Pancreas (tissue), 10 donors: ENCODE measurements at regions of chr15 and their contacts with region 1.

Region 1: GRCh38 chr15:38683382-38684242 is 119.0 kb upstream of the RASGRP1 start:
- DNase-seq: peak in 5 of 6 donors; percentile 41 to 70 (median 52)
- ATAC-seq: peak; percentile 84 to 99 (median 96)
- H3K4me3 ChIP-seq: no peak overlapping the region
- H3K27ac ChIP-seq: no peak overlapping the region
- H3K4me1 ChIP-seq: no peaks in the 10 kb centered on the region
- H3K27me3 ChIP-seq: no peaks in the 10 kb centered on the region
- CTCF ChIP-seq: peak; percentile 36 to 66 (median 60)

Region 2: DNA sequence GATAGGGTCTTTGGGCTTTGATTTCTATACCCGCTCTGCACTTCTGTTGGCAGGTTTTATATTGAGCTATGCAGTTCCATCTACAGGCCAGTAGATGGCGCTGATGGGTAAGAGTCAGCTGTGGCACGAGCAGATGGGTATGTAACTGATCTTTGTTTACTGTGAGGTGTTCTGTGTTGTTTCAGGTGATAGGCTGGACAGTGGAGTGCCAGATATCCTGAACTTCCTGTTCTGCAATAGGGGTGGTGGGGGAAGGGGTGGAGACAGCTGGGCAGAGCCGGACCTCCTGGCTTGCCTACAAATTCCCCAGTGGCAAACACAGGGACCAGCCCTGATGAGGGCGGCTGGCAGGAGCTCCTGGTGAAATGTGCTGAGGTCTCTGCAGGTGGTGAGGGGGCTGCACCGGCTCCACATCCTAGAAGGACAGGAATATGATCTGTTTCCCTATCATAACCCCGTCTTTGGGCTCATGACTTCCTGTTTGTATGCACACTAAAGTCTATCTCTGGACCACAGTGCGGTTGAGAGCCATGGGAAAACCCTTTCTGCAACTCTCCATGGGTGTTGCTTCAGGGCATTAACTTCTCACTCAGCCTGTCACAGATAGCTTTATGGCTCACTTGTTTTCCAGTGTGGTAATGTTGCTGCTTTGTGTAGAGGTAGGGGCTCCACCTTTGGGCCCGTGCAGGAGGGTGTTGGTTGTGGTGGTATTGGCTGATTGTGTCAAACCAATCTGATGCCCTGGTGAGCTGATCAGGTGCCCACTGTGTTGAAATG is 243.1 kb before region 1 on chr15:
- intact Hi-C with region 1: loop called in 1 of 3 experiments (anchors 10 kb)
- DNase-seq: peak in 5 of 6 donors; percentile 43 to 67 (median 56)
- ATAC-seq: peak; percentile 72 to 99 (median 96)
- H3K4me3 ChIP-seq: no peak overlapping the region
- H3K27ac ChIP-seq: no peak overlapping the region
- H3K4me1 ChIP-seq: no peaks in the 10 kb centered on the region
- H3K27me3 ChIP-seq: peaks cover 0 to 5% (median 0%) of the 10 kb centered on the region in 4 donors
- CTCF ChIP-seq: peak; percentile 78 to 96 (median 92)

Region 3: DNA sequence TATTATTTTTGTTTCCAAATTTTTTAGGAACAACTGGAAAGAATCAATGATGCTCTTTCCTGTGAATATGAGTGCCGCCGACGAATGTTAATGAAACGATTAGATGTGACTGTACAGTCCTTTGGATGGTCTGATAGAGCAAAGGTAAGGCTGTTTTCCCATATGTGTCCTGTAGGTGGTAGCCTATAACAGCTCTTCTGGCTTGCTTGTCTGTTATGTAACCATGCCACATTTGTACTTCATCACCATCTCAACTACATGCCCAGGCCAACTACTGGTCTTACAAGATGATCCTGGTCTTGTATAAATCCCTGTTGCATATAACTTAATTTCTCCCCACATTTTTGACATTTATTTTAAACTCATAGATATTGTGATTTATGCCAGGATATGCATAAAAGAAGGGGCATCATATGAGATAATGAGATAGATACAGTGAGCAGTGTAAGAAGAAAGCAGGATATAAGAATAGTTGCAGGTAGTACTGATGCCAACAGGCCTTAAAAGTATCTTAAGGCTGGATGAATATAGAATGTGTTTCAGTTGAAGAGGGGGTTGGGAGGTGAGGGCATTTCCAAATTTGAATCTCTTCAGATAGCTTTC is 209.4 kb before region 1 on chr15:
- intact Hi-C with region 1: loop called in 1 of 3 experiments (anchors 10 kb)
- DNase-seq: peak in 2 of 6 donors; percentile 19 to 27
- ATAC-seq: peak; percentile 97 to 100 (median 99)
- H3K4me3 ChIP-seq: no peak overlapping the region
- H3K27ac ChIP-seq: no peak overlapping the region
- H3K4me1 ChIP-seq: no peaks in the 10 kb centered on the region
- H3K27me3 ChIP-seq: no peaks in the 10 kb centered on the region
- CTCF ChIP-seq: peak; percentile 16 to 45 (median 23)

Region 4: DNA sequence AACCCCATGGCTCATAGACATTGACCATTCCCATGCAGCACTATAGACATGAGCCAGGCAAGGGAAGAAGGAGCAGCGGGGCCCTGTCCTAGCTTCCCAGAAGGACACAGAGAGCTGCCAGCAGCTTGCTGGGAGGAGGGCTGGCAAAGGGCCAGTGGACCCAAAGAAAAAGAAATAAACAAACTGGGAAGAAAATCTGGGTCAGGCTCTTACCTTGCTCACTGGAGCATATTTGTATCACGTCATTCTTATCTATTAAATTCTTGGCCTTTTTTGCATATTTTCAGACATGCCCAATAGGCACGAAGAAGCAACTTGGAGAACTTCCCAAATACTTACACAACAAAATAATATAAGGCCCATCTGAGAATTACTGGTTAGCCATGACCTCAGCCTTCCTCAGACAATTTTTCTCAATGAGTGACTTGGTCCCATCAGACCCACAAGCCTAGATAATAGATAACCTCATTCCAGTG is 147.4 kb before region 1 on chr15:
- intact Hi-C with region 1: no loop called
- DNase-seq: peak in 2 of 6 donors; percentile 13 to 22
- ATAC-seq: peak in 2 of 4 donors; percentile 28 to 53
- H3K4me3 ChIP-seq: no peak overlapping the region
- H3K27ac ChIP-seq: no peak overlapping the region
- H3K4me1 ChIP-seq: no peaks in the 10 kb centered on the region
- H3K27me3 ChIP-seq: no peaks in the 10 kb centered on the region
- CTCF ChIP-seq: no peak

Region 5: GRCh38 chr15:38563723-38564519 is 119.7 kb before region 1 on chr15:
- intact Hi-C with region 1: loop called in 1 of 3 experiments (anchors 5 kb)
- DNase-seq: peak; percentile 55 to 93 (median 76)
- ATAC-seq: peak; percentile 93 to 94 (median 93)
- H3K4me3 ChIP-seq: peak overlapping the region; percentile 47 to 78 (median 66)
- H3K27ac ChIP-seq: peak overlapping the region in 3 of 4 donors; percentile 35 to 64 (median 60)
- H3K4me1 ChIP-seq: peaks cover 0 to 3% (median 0%) of the 10 kb centered on the region in 3 donors
- H3K27me3 ChIP-seq: no peaks in the 10 kb centered on the region
- CTCF ChIP-seq: peak; percentile 88 to 94 (median 88)